Caco-2 (cell line): ENCODE measurements at regions of chr19 and their contacts with region 1.

Region 1: DNA sequence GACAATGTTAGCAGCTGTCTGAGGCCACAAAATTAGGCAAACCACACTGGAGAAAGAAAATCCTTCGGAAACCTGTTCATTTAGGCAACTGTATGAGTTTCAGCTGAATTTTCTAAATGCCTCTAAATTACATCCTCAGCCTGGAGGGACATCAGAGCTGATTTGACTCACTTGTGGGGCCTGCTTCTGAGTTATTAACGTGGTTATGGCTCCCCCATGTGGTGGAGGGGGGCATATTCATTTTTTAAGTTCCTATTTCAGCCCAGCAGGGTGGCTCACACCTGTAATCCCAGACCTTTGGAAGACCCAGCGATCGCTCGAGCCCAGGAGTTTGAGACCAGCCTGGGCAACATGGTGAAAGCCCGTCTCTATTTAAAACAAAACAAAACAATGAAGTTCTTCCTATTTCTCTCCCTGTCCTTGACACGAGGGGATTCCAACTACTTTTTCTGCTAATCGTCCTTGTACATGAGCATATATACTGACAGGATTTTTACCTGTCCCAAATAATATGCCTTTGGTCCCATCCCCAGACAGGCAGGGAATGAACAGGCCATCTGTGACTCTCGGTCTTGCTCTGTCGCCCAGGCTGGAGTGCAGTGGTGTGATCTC is 31.5 kb upstream of the HIF3A start:
- DNase-seq: peak; percentile 80 to 89
- H3K4me3 ChIP-seq: no peak overlapping the region
- H3K4me3 Mint-ChIP-seq: no peak overlapping the region
- H3K27ac Mint-ChIP-seq: no peak overlapping the region
- H3K4me1 ChIP-seq: peaks cover 4% of the 10 kb centered on the region
- H3K4me1 Mint-ChIP-seq: no peaks in the 10 kb centered on the region
- H3K27me3 ChIP-seq: no peaks in the 10 kb centered on the region
- H3K27me3 Mint-ChIP-seq: no peaks in the 10 kb centered on the region
- CTCF ChIP-seq: peak; percentile 74 to 96

Region 2: GRCh38 chr19:46030812-46031550 is 234.3 kb before region 1 on chr19:
- CTCF ChIA-PET with region 1: interaction called, 21 read pairs
- POLR2A ChIA-PET with region 1: no interaction called
- intact Hi-C with region 1: loop called (anchors 1 kb)
- DNase-seq: peak; percentile 71 to 82
- H3K4me3 ChIP-seq: no peak overlapping the region
- H3K4me3 Mint-ChIP-seq: peak overlapping the region; percentile 43
- H3K27ac Mint-ChIP-seq: peak overlapping the region; percentile 33
- H3K4me1 ChIP-seq: peaks cover 37% of the 10 kb centered on the region
- H3K4me1 Mint-ChIP-seq: peaks cover 32% of the 10 kb centered on the region
- H3K27me3 ChIP-seq: no peaks in the 10 kb centered on the region
- H3K27me3 Mint-ChIP-seq: no peaks in the 10 kb centered on the region
- CTCF ChIP-seq: no peak

Region 3: DNA sequence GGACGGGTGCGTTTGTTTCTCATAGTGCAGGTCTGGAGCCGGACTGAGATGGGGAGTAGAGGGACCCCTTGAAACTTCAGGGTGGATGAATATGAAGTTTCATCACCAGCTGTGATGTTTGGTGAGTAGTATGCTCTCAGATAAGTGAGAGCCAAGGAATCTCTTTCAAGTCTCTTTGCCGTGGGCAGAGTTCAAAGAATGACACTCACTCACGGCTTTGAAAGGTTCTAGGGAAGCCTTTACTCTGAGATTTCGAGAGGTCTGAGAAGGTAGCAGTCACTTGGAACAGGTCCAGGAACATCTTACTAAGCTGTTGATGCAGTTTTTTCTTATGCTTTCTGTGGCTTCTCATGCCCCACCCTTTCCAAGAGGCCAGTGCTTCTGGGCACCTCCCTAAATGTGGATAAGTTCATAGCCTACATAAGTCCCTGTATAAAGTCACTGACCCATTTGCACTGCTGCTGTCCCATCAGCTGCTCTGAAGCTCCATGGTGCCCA is 117.5 kb before region 1 on chr19 and contains the start of gene IGFL2:
- CTCF ChIA-PET with region 1: interaction called, 7 read pairs
- POLR2A ChIA-PET with region 1: no interaction called
- intact Hi-C with region 1: loop called (anchors 5 kb)
- DNase-seq: peak; percentile 76 to 83
- H3K4me3 ChIP-seq: peak within 1 kb of the TSS; percentile 11
- H3K4me3 Mint-ChIP-seq: peak within 1 kb of the TSS; percentile 81
- H3K27ac Mint-ChIP-seq: peak within 1 kb of the TSS; percentile 92
- H3K4me1 ChIP-seq: peaks cover 42% of the 10 kb centered on the region
- H3K4me1 Mint-ChIP-seq: peaks cover 45% of the 10 kb centered on the region
- H3K27me3 ChIP-seq: no peaks in the 10 kb centered on the region
- H3K27me3 Mint-ChIP-seq: no peaks in the 10 kb centered on the region
- CTCF ChIP-seq: no peak
- total RNA-seq, gene IGFL2: 57.7 and 64.7 TPM in 2 replicates

Region 4: GRCh38 chr19:46192992-46193650 is 72.2 kb before region 1 on chr19:
- CTCF ChIA-PET with region 1: interaction called, 11 read pairs
- POLR2A ChIA-PET with region 1: no interaction called
- intact Hi-C with region 1: loop called (anchors 1 kb)
- DNase-seq: peak; percentile 83 to 85
- H3K4me3 ChIP-seq: no peak overlapping the region
- H3K4me3 Mint-ChIP-seq: peak overlapping the region; percentile 56
- H3K27ac Mint-ChIP-seq: peak overlapping the region; percentile 87
- H3K4me1 ChIP-seq: peaks cover 33% of the 10 kb centered on the region
- H3K4me1 Mint-ChIP-seq: peaks cover 41% of the 10 kb centered on the region
- H3K27me3 ChIP-seq: no peaks in the 10 kb centered on the region
- H3K27me3 Mint-ChIP-seq: no peaks in the 10 kb centered on the region
- CTCF ChIP-seq: no peak

Region 5: DNA sequence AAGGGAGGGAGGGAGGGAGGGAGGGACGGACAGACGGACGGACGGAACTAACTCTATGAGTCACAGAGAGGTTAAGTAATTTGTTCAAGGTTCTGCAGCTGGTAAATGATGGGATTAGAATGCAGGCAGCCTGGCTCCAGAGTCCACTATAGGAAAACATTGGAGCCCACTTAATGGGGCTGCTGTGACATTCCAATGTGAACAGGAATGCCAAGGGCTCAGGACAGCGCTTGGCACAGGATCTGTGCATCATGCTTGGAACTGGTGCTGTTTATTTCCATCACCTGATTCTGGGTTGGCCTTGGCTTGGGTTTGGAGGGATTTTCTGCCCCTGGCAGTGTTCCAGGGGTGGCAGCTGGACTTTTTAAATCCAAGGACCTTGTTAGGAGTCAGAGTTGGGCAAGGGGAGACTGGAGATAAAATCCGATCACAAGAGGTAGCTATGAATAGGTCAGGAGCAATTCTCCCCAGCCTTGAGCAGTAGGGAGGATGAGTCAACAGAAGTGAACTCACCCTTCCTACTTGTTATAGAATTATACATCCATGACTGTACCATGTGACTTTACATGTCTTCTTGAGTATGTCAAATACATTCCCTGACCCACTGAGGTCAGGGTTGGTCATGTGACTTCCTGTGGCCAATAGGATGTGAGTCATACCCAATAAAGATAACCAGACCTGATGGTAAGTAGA is 23.7 kb after region 1 on chr19:
- CTCF ChIA-PET with region 1: no interaction called
- POLR2A ChIA-PET with region 1: no interaction called
- intact Hi-C with region 1: no loop called
- DNase-seq: no peak
- H3K4me3 ChIP-seq: no peak overlapping the region
- H3K4me3 Mint-ChIP-seq: no peak overlapping the region
- H3K27ac Mint-ChIP-seq: no peak overlapping the region
- H3K4me1 ChIP-seq: no peaks in the 10 kb centered on the region
- H3K4me1 Mint-ChIP-seq: no peaks in the 10 kb centered on the region
- H3K27me3 ChIP-seq: no peaks in the 10 kb centered on the region
- H3K27me3 Mint-ChIP-seq: no peaks in the 10 kb centered on the region
- CTCF ChIP-seq: no peak